ENCODE measurements at regions of chr1 and their contacts with region 1.

Region 1: DNA sequence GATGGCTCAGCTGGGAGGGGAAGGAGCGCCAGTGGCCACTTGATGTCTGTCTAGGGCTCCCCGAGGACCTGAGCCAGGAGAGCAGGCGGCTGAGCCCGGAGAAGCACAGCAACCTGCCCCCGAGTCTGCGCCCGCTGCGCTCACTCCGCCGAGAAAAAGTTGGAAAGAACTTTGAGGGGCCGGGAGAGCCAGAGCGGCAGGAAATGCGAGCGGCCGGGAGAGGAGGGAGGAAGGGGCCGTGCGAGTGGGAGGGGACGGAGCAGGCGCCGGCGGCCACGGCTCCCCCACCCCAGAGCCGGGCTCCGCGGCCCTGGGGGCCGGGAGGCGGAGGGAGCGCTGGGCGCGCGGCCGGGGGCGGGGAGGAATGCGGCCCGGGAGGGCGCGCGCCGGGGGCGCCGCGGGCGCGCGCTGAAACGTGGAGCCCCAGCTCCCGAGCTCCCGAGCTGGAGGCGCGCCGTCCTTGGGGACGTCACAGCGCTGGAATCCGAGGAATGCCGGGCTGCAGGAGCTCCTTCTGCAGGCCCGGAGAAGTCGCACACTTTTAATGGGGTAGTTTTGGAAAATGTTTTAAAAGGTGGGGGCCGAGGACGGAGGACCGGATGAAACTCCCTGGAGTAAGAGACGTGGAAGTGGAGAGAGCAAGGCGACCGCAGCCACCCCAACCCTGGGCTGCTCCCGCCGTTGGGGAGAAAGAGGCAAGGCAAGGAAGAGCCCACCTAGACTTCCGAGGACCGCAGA is at the start of gene PTPN14:
- DNase-seq: peak; percentile 89
- ATAC-seq: peak; percentile 88 to 94 (median 90)
- H3K4me3 ChIP-seq: peak within 1 kb of the TSS; percentile 63 to 95 (median 88)
- H3K27ac ChIP-seq: peak within 1 kb of the TSS; percentile 92 to 99 (median 98)
- H3K4me1 ChIP-seq: peaks cover 5 to 52% (median 44%) of the 10 kb centered on the region in 9 donors
- H3K27me3 ChIP-seq: peaks cover 0 to 32% (median 0%) of the 10 kb centered on the region in 7 donors
- CTCF ChIP-seq: peak in 7 of 9 donors; percentile 23 to 69 (median 35)
- total RNA-seq, gene PTPN14: 23.5 to 71.6 (median 45.5) TPM

Region 2: GRCh38 chr1:214328770-214329469 is 222.7 kb before region 1 on chr1:
- intact Hi-C with region 1: loop called in 2 of 10 experiments (anchors 5 to 10 kb)
- DNase-seq: peak; percentile 74 to 83
- ATAC-seq: peak; percentile 83 to 91 (median 88)
- H3K4me3 ChIP-seq: no peak overlapping the region
- H3K27ac ChIP-seq: peak overlapping the region in 6 of 10 donors; percentile 31 to 86 (median 76)
- H3K4me1 ChIP-seq: peaks cover 6 to 62% (median 27%) of the 10 kb centered on the region in 9 donors
- H3K27me3 ChIP-seq: no peaks in the 10 kb centered on the region
- CTCF ChIP-seq: peak; percentile 83 to 96 (median 92)

Region 3: GRCh38 chr1:214404154-214404553 is 147.5 kb before region 1 on chr1:
- intact Hi-C with region 1: loop called in 2 of 10 experiments (anchors 10 kb)
- DNase-seq: no peak
- ATAC-seq: no peak
- H3K4me3 ChIP-seq: no peak overlapping the region
- H3K27ac ChIP-seq: peak overlapping the region in 1 of 10 donors; percentile 29
- H3K4me1 ChIP-seq: peaks cover 0 to 27% (median 4%) of the 10 kb centered on the region in 9 donors
- H3K27me3 ChIP-seq: no peaks in the 10 kb centered on the region
- CTCF ChIP-seq: no peak

Region 4: GRCh38 chr1:214439352-214440119 is 112.1 kb before region 1 on chr1:
- intact Hi-C with region 1: loop called in 1 of 10 experiments (anchors 10 kb)
- DNase-seq: no peak
- ATAC-seq: peak; percentile 53 to 91 (median 73)
- H3K4me3 ChIP-seq: peak overlapping the region in 1 of 10 donors; percentile 22
- H3K27ac ChIP-seq: peak overlapping the region in 7 of 10 donors; percentile 27 to 60 (median 43)
- H3K4me1 ChIP-seq: peaks cover 0 to 51% (median 33%) of the 10 kb centered on the region in 9 donors
- H3K27me3 ChIP-seq: no peaks in the 10 kb centered on the region
- CTCF ChIP-seq: no peak

Region 5: DNA sequence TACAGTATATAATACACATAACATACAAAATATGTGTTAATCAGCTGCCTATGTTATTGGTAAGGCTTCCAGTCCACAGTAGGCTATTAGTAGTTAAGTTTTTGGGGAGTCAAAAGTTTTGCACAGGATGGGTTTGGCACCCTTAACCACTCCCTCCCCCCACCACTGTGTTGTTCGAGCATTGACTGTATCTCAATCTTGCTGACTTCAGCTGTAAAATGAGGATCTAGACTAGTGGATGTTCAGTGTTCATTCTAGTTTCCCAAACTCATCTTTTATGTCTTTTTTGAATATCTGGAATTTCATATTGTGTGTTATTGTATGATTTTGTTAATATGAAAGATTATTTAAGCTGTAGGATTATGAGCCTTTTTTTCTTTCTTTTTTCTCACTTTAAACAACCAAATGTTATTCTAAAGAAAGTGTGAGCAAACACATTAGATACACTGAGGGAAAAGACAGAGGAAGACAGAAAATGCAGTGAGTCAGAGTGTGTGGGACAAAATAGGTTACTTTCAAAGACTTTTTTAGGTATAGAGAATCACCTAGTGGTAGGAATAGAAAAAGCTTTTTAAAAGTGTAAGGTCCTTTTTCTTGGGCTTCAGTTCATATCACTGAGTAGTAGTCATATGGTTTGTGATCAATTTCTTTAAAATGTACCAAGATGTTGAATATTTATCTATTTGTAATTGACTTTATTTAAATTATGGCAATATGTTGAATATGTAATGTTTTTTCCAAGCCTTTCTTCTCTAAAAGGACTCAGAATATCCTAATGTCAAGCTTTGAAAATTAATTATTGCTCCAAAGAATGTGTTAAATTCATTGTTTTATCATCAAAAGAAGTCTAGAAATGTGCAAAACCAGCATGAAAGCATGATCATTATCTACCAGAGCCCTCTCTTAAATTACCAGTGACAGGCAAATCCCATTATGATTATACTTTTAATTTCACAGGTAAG is 33.5 kb after region 1 on chr1:
- intact Hi-C with region 1: loop called in 1 of 10 experiments (anchors 5 kb)
- DNase-seq: no peak
- ATAC-seq: peak in 7 of 8 donors; percentile 72 to 87 (median 76)
- H3K4me3 ChIP-seq: no peak overlapping the region
- H3K27ac ChIP-seq: no peak overlapping the region
- H3K4me1 ChIP-seq: peaks cover 0 to 3% (median 0%) of the 10 kb centered on the region in 9 donors
- H3K27me3 ChIP-seq: no peaks in the 10 kb centered on the region
- CTCF ChIP-seq: peak; percentile 44 to 86 (median 76)

Region 6: DNA sequence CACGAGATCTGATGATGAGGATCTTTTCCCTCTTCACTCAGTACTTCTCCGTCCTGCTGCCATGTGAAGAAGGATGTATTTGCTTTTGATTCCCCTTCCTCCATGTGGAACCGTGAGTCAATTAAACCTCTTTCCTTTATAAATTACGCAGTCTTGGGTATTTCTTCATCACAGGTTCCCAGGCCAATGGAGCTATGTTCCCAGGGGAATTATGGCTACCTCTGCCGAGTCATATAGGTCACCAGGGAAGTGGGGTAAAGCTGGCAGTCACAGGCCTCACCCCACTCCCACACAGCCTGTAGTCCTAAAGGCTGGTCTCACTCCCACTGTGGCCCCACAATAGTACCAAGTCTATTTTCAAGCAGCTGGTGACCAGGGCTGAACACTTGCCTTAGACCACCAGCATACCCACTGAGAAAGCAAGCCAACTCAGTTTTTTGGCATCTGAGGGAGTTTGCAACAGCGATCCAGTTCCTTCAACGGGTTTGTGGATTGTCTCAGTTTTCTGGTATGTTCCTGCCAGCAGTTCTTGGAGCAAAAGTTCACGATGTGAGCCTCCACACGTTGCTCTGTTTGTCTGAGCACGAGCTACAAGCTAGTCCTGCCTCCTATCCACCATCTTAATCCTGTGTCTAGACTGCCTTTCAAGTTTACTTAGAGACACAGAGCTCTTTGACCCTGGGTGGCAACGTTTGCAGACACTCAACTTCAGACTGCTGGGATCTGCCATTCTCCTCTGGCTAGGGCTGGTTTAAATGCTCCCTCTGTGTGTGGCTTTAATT is 155.9 kb after region 1 on chr1:
- intact Hi-C with region 1: no loop called
- DNase-seq: no peak
- ATAC-seq: no peak
- H3K4me3 ChIP-seq: no peak overlapping the region
- H3K27ac ChIP-seq: no peak overlapping the region
- H3K4me1 ChIP-seq: no peaks in the 10 kb centered on the region
- H3K27me3 ChIP-seq: no peaks in the 10 kb centered on the region
- CTCF ChIP-seq: no peak

Measured in heart right ventricle (tissue), 16 donors.